Activated CD4-positive, alpha-beta T cell treated with anti-CD3 and anti-CD28 coated beads, Interleukin-2, amount 10 ng/mL, durations not matched to agents 24 days and 14 days (primary cell): ENCODE measurements at regions of chr7 and their contacts with region 1.

Region 1: DNA sequence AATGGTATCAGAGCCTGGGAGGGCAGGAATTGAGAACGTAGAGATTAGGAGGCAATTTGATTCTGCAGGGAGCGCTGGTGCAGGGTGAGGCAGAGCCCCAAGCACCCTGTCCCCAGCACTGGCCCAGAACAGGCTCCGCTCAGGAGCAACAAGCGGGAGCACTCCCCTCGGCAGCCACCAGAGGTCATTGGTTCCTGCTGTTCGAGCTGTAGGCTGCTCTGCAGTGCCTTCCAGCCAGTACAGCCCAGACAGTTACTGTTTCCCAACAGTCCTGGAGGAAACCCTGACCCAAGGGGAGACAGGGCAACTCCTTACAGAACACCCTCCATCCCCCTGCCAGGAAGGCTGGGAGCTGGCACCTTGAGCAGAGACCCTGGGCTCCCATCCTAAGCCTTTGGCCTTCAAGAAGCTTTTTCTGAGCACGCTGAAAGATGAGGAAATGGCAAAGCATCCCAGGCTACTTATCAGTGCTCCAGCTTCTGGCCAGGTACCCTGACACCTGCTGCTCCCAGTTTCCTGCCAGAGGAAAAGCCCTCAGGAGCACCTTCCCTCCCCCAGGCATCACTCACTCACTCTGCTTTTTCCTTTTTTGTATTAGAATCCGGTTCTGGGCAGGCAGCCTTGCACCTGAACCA is 71.2 kb upstream of the EFCAB10 start:
- DNase-seq: peak; percentile 89
- H3K4me3 Mint-ChIP-seq: no peak overlapping the region
- H3K27ac Mint-ChIP-seq: no peak overlapping the region
- H3K4me1 Mint-ChIP-seq: peaks cover 6% of the 10 kb centered on the region
- H3K27me3 Mint-ChIP-seq: no peaks in the 10 kb centered on the region

Region 2: DNA sequence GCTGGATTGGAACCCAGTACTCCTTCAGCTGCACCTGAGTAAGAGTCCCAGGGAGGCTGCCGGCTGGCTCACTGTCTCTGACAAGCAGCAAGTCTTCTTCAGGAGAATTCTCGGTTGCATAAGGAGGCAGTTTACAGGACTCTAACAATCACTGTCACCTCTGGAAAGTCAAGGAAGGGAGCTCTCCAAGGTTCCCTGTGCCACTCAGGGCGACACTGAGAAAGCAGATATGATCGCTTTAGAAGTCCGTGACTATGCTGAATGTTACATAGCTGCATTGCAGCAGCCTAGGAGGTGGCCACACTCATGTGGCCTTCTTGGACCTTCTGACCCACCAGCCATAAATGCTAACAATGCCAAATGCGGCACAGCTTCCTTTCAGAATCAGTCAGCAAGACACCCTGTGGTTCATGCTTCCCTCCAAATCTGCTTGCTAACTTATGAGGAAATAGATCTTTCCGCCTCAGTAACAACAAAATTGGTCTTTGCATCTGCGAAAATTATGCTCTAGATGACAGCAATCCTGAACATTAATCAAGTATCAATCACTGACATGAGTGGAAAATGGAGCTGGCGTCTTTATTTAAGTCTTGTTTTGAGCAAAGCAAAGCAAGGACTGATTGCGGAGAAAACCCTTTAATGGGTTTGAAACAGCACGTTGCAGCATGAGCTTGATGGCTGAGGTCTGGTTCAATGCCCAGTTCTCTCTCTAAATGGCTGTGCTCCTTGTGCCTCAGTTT is 91.0 kb after region 1 on chr7:
- intact Hi-C with region 1: loop called (anchors 10 kb)
- DNase-seq: no peak
- H3K4me3 Mint-ChIP-seq: no peak overlapping the region
- H3K27ac Mint-ChIP-seq: no peak overlapping the region
- H3K4me1 Mint-ChIP-seq: no peaks in the 10 kb centered on the region
- H3K27me3 Mint-ChIP-seq: no peaks in the 10 kb centered on the region

Region 3: DNA sequence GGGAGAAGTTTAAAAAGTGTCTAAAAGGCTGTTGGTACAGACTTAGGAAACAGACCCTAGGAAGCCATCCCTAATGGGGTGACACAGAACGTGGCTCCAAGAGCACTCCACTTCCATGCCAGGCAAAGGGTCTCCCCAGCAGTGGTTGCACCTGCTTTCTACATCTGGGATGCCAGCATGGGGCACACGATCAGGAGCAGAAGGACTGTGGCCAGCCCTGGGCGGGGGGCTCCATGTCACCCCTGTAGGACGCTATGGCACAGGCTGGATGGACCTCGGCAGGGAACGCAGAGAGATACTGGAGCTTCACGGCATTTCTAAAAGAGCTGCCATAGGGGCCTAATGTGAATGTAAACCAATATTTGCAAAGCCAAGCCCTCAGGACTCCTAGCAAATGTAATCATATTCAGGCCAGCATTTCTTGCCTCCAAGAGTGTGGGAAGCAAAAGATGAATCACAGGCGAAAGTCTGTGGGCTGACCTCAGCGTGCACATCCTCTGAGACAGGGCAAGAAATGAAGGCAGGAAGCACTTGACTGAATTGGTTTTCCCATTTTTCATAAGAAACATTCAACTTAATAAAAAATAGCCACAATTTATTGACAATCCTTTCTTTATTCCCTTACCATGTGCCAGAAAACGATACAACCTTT is 130.0 kb after region 1 on chr7:
- intact Hi-C with region 1: no loop called
- DNase-seq: peak; percentile 64
- H3K4me3 Mint-ChIP-seq: no peak overlapping the region
- H3K27ac Mint-ChIP-seq: no peak overlapping the region
- H3K4me1 Mint-ChIP-seq: peaks cover 13% of the 10 kb centered on the region
- H3K27me3 Mint-ChIP-seq: peaks cover 32% of the 10 kb centered on the region

Region 4: DNA sequence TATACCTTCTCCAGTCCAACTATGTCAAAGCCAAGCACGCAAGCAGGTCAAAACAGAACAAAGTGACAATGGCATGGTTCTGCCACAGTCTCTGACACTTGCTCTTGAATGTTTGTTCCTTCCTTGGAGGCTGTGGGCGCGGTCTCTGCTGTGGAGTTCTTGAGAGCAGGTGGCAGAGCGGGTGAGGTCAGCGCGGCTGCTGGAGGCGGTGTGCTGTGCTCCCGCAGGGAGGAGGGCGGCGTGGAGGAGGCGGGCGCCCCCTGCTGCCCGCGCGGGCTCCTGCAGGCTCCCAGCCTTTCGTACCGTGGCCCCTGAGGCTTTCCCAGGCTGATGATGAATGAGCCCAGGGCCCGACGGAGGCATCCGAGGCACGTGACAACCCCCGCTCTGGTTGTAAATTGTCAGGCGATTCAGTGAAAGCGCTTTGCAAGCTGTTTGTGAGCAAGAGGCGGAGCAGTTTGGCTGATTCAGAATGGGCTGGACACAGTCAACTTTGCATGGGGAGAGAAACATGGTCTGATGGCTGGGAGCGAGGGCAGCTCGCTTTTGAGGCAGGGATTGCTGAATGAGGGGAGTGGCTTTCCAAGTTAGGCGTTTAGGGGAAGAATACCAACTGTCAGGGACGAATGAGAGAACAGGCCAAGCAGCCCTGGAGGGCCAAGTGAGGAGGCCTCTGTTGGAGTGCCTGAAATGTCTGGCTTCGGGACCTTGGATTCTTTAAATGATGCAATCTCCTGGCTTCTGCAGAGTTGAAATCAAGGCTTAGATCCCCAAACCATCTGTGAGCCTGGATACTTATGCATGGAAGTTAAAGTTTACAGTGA is 357.1 kb after region 1 on chr7:
- intact Hi-C with region 1: loop called (anchors 1 kb)
- DNase-seq: peak; percentile 94
- H3K4me3 Mint-ChIP-seq: no peak overlapping the region
- H3K27ac Mint-ChIP-seq: no peak overlapping the region
- H3K4me1 Mint-ChIP-seq: peaks cover 10% of the 10 kb centered on the region
- H3K27me3 Mint-ChIP-seq: peaks cover 50% of the 10 kb centered on the region

Region 5: GRCh38 chr7:106041140-106041717 is 388.8 kb after region 1 on chr7:
- intact Hi-C with region 1: loop called (anchors 1 kb)
- DNase-seq: peak; percentile 73
- H3K4me3 Mint-ChIP-seq: no peak overlapping the region
- H3K27ac Mint-ChIP-seq: no peak overlapping the region
- H3K4me1 Mint-ChIP-seq: peaks cover 9% of the 10 kb centered on the region
- H3K27me3 Mint-ChIP-seq: peaks cover 32% of the 10 kb centered on the region

Region 6: DNA sequence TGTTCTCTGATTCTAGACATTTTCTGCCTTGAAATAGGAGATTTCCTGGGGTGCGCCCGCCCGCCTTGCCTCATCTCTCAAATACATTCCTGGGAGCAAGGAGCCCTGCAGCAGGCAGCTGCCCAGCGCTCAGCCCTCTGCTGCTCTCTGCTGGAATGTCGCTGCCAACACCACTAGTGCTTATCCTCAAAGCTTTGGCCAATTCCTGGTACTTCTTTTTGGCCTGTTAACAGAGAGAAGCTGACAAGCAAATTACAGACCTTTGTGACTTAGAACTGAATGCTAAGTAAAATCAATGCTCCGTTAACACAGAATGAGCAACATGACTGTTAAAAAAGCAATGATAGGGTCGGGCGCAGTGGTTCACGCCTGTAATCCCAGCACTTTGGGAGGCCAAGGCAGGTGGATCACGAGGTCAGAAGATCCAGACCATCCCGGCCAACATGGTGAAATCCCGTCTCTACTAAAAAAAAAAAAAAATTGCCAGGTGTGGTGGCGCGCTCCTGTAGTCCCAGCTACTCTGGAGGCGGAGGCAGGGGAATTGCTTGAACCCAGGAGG is 501.5 kb after region 1 on chr7:
- intact Hi-C with region 1: loop called (anchors 10 kb)
- DNase-seq: peak; percentile 91
- H3K4me3 Mint-ChIP-seq: no peak overlapping the region
- H3K27ac Mint-ChIP-seq: no peak overlapping the region
- H3K4me1 Mint-ChIP-seq: peaks cover 12% of the 10 kb centered on the region
- H3K27me3 Mint-ChIP-seq: peaks cover 34% of the 10 kb centered on the region